Activated T-helper 2 cell treated with anti-CD3 and anti-CD28 coated beads, Interferon-gamma antibody, Interleukin-2, Interleukin-4, amounts not matched to agents 10 μg/mL and 5 μg/mL and 100 μg/mL, durations not matched to agents 14 hours and 24 hours and 36 hours (primary cell): ENCODE measurements at regions of chr7 and their contacts with region 1.

Region 1: DNA sequence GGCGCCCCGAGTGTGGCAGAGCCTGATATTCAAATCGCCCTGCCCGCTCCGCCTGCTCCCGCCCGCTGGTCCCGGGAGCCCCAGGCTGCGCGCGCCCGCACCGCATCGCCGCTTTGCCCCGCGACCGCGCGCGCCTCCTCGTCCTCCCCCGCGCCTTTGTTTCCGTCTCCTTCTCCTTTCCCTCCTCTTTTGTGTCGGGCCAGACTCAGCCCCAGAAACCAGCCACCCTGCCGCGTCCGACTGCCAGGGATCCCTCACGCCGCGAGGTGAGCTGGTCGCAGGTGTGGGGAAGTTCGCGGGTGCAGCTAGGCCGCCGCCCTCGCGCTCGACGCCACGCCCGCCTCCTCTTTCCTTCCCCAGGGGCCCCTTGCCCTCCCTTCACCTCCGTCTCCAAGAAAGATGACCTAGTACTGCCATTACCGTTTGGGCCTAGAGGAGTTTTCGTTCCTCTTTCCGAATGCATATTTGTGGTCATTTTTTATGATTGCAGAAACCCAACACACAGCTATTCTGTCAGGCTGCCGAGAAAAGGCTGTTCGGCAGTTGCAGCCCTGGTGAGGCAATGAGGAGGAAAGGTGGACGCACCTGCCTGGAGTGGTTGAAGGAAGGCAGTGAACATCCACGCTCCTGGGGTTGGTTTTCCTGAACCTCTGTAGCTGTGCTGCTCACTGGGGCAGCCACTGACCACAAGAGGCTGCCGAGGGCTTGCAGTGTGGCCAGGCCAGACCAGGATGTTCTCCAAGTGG is 107.3 kb downstream of the SNX10 start:
- DNase-seq: peak; percentile 22
- H3K4me3 Mint-ChIP-seq: peak overlapping the region; percentile 97
- H3K27ac Mint-ChIP-seq: peak overlapping the region; percentile 97
- H3K4me1 Mint-ChIP-seq: peaks cover 15% of the 10 kb centered on the region
- H3K27me3 Mint-ChIP-seq: peaks cover 47% of the 10 kb centered on the region

Region 2: DNA sequence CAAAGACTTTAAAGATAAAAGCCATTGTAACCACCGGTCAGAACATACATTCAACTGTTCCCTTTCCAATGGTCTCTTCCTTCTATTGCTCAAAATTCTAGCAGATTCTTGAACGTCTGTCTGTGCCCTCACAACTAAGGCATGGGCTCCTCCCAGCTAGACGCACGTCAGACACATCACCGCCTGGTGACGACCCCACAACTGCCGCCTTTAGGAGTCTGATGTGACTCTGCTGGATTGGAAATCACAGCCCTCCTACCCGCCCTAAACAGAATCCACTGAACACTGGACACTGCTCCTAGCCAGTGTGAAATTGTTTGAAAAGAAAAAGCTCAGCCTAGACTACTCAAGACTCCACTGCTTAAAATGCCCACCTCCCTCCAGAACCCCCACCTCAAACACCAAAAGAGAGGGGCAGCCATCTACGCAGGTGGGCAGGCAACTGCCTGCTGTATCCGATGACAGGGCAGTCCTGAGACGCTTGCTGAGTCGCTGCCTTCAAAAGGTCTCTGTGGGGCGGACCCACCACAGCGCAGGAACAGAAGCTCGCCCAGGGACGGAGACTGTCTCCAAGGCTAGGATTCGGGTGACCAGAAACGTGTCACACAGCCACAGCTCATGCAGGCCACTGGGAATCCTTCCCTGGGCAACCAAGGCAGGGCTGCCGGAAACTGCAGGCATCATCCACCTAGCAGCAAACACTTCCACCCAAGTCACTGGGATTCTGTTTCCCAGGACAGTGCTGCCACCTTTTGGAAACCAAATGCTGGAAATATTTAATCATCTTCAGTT is 1676.3 kb before region 1 on chr7:
- intact Hi-C with region 1: loop called (anchors 10 kb)
- DNase-seq: no peak
- H3K4me3 Mint-ChIP-seq: no peak overlapping the region
- H3K27ac Mint-ChIP-seq: no peak overlapping the region
- H3K4me1 Mint-ChIP-seq: peaks cover 11% of the 10 kb centered on the region
- H3K27me3 Mint-ChIP-seq: no peaks in the 10 kb centered on the region

Region 3: DNA sequence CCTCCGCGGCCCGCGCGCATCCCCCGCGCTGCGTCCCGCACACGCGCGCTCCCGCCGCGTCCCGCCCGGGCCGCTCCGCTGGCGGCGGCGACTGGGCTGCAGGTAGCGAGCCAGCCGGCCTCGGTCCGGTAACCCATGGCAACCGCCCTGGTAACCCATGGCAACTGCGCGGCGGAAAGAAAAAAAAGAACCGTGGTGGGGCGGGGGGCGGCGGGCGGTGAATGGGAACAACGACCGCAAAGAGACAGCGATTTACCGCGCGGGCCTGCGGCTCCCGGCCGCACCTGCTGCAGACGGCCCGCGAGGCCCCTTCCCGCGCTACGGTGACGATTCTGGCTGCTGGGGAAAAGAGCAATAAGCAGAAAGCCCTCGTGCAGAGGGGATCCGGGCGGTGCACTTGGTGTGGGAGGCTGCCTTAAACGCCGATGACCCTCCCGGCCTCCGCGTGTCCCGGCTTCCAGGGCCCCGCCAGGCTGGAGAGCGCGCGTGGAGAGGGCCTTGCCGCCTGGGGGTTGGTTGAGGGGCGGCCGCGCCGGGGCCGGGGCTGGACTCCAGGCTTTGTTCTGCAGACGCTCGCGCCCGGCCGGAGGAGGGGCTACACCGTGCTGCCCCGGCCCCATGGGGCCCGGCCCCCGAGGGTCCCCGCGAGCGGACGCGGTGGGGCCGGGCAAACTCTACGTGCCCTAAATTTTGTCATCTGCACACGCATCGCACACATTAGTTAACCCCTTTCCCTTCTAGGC is 22.6 kb before region 1 on chr7:
- intact Hi-C with region 1: loop called (anchors 1 kb)
- DNase-seq: peak; percentile 27
- H3K4me3 Mint-ChIP-seq: peak overlapping the region; percentile 81
- H3K27ac Mint-ChIP-seq: peak overlapping the region; percentile 71
- H3K4me1 Mint-ChIP-seq: peaks cover 4% of the 10 kb centered on the region
- H3K27me3 Mint-ChIP-seq: peaks cover 7% of the 10 kb centered on the region